A673 (cell line): ENCODE measurements at regions of chr3 and their contacts with region 1.

Region 1: GRCh38 chr3:78969483-78969882 is 798.3 kb downstream of the ROBO1 start:
- DNase-seq: peak; percentile 92
- H3K4me3 ChIP-seq: no peak overlapping the region
- H3K27ac ChIP-seq: peak overlapping the region; percentile 75
- H3K4me1 ChIP-seq: peaks cover 40% of the 10 kb centered on the region
- H3K27me3 ChIP-seq: no peaks in the 10 kb centered on the region
- CTCF ChIP-seq: no peak

Region 2: DNA sequence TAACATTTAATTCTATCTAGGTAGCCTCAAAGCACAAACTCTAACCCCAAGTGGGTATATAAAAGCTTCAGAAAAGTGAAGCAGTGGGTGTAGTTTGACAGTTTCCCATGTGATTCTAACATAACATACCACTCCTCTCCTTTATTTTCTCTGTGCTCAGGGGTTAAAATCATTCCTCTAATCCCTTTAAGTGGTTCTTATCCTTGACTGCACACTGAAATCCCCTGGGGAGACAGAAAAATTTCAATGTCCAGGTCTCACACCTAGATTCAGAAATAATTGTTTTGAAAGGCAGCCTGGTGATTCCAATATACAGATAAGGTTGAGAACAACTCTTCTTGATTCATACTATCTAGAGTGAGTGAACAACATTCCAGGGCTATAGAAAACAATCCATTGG is 188.1 kb before region 1 on chr3:
- CTCF ChIA-PET with region 1: no interaction called
- POLR2A ChIA-PET with region 1: no interaction called
- intact Hi-C with region 1: no loop called
- DNase-seq: no peak
- H3K4me3 ChIP-seq: no peak overlapping the region
- H3K27ac ChIP-seq: no peak overlapping the region
- H3K4me1 ChIP-seq: no peaks in the 10 kb centered on the region
- H3K27me3 ChIP-seq: no peaks in the 10 kb centered on the region
- CTCF ChIP-seq: no peak

Region 3: DNA sequence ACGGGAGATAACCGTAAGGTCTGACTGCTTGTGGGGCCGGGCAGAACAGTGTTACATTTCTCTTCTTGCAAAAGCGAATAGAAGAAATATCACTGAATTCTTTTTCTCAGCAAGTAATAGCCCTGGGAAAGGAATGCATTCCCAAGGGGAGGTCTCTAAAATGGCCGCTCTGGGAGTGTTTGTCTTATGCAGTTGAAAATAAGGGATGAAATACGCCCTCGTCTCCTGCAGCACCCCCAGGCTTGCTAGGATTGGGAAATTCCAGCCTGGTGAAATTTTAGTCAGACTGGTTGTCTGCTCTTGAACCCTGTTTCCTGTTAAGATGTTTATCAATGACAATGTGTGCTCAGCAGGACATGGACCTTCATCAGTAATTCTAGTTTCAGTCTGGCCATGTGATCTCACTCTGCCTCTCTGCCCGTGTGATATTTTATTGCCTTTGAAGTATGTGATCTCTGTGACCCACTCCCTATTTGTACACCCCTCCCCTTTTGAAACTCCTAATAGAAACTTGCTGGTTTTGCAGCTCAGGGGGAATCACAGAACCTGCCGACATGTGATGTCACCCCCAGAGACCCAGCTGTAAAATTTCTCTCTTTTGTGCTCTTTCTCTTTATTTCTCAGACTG is 82.7 kb after region 1 on chr3:
- CTCF ChIA-PET with region 1: interaction called, 16 read pairs
- POLR2A ChIA-PET with region 1: no interaction called
- intact Hi-C with region 1: no loop called
- DNase-seq: peak; percentile 33
- H3K4me3 ChIP-seq: no peak overlapping the region
- H3K27ac ChIP-seq: no peak overlapping the region
- H3K4me1 ChIP-seq: no peaks in the 10 kb centered on the region
- H3K27me3 ChIP-seq: no peaks in the 10 kb centered on the region
- CTCF ChIP-seq: no peak

Region 4: GRCh38 chr3:79074558-79074957 is 105.1 kb after region 1 on chr3:
- CTCF ChIA-PET with region 1: no interaction called
- POLR2A ChIA-PET with region 1: no interaction called
- intact Hi-C with region 1: no loop called
- DNase-seq: no peak
- H3K4me3 ChIP-seq: no peak overlapping the region
- H3K27ac ChIP-seq: no peak overlapping the region
- H3K4me1 ChIP-seq: no peaks in the 10 kb centered on the region
- H3K27me3 ChIP-seq: no peaks in the 10 kb centered on the region
- CTCF ChIP-seq: no peak

Region 5: DNA sequence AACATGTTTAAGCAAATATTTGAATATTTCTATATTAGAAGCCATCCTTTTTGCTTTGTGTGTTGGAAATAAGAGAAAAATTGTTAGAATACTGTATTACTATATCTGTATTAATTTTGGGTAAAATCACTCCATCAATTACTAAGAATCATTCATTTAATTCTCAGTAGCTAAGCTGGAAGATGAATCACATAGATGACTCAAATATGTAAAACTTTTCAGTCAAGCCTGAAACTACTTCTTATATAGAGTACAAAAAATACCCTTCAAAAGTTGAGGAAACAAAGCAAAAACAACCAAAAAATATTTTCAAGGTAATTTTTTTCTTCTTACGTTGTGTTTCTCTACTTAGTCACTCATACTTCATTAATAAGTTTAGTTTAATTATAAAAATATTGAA is 1004.0 kb after region 1 on chr3:
- CTCF ChIA-PET with region 1: no interaction called
- POLR2A ChIA-PET with region 1: no interaction called
- intact Hi-C with region 1: no loop called
- DNase-seq: no peak
- H3K4me3 ChIP-seq: no peak overlapping the region
- H3K27ac ChIP-seq: no peak overlapping the region
- H3K4me1 ChIP-seq: peaks cover 15% of the 10 kb centered on the region
- H3K27me3 ChIP-seq: no peaks in the 10 kb centered on the region
- CTCF ChIP-seq: no peak